ENCODE measurements at regions of chr11 and their contacts with region 1.

Region 1: GRCh38 chr11:26914968-26915367 is 78.9 kb upstream of the FIBIN start:
- DNase-seq: peak; percentile 94
- H3K4me3 ChIP-seq: peak overlapping the region; percentile 32
- H3K27ac ChIP-seq: peak overlapping the region; percentile 97
- H3K4me1 ChIP-seq: peaks cover 71% of the 10 kb centered on the region
- CTCF ChIP-seq: no peak

Region 2: DNA sequence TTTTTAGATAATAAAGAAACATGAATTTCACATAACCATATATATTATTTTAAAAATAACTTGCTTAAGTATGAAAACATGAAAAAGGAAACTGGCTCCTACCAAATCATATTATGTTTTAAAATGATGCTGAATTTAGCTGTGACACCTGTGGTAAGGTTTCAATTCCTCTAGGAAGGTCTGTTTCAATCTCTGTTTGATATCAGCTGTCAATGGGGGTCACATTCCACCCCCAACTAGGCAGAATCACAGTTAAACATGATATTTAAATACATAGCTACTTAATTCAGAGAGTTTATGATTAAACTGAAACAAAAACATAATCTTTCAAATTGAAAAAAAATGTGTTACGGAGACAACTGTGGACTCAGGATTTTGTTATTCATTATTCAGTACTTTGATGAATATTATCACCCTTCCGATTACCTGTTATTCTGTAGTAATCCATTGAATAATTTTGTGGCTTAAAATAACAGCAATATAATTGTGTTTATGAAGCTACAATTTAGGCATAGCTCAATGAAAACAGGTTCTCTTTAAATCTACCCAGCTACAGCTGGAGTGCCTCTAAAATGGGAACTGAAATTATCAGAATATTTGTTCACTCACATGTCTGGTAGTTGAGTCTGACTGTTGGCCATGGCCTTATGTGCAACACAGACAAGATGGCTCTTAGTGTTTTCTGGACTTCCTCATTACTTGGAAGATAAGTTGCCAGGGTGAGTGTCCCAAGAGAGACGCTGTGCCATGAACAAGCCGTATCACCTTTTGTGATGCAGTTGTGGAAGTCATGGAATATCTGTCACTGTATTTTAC is 827.6 kb before region 1 on chr11:
- CTCF ChIA-PET with region 1: no interaction called
- POLR2A ChIA-PET with region 1: no interaction called
- intact Hi-C with region 1: loop called (anchors 10 kb)
- DNase-seq: peak; percentile 91
- H3K4me3 ChIP-seq: peak overlapping the region; percentile 46
- H3K27ac ChIP-seq: peak overlapping the region; percentile 99
- H3K4me1 ChIP-seq: peaks cover 82% of the 10 kb centered on the region
- CTCF ChIP-seq: no peak

Region 3: GRCh38 chr11:26778000-26778757 is 136.8 kb before region 1 on chr11:
- CTCF ChIA-PET with region 1: no interaction called
- POLR2A ChIA-PET with region 1: no interaction called
- intact Hi-C with region 1: loop called (anchors 5 kb)
- DNase-seq: peak; percentile 60
- H3K4me3 ChIP-seq: no peak overlapping the region
- H3K27ac ChIP-seq: peak overlapping the region; percentile 49
- H3K4me1 ChIP-seq: peaks cover 30% of the 10 kb centered on the region
- CTCF ChIP-seq: no peak

Region 4: GRCh38 chr11:27158722-27159679 is 244.0 kb after region 1 on chr11:
- CTCF ChIA-PET with region 1: no interaction called
- POLR2A ChIA-PET with region 1: no interaction called
- intact Hi-C with region 1: loop called (anchors 10 kb)
- DNase-seq: peak; percentile 71
- H3K4me3 ChIP-seq: no peak overlapping the region
- H3K27ac ChIP-seq: no peak overlapping the region
- H3K4me1 ChIP-seq: no peaks in the 10 kb centered on the region
- CTCF ChIP-seq: peak; percentile 88

Region 5: GRCh38 chr11:27171376-27171775 is 256.4 kb after region 1 on chr11:
- CTCF ChIA-PET with region 1: no interaction called
- POLR2A ChIA-PET with region 1: no interaction called
- intact Hi-C with region 1: no loop called
- DNase-seq: no peak
- H3K4me3 ChIP-seq: no peak overlapping the region
- H3K27ac ChIP-seq: no peak overlapping the region
- H3K4me1 ChIP-seq: no peaks in the 10 kb centered on the region
- CTCF ChIP-seq: no peak

Region 6: GRCh38 chr11:28107748-28108618 is 1193.0 kb after region 1 on chr11 and contains the starts of genes KIF18A and METTL15:
- CTCF ChIA-PET with region 1: no interaction called
- POLR2A ChIA-PET with region 1: no interaction called
- intact Hi-C with region 1: loop called (anchors 5 kb)
- DNase-seq: peak; percentile 99
- H3K4me3 ChIP-seq: peak within 1 kb of the TSS; percentile 93
- H3K27ac ChIP-seq: peak within 1 kb of the TSS; percentile 82
- H3K4me1 ChIP-seq: peaks cover 40% of the 10 kb centered on the region
- CTCF ChIP-seq: no peak
- total RNA-seq, gene KIF18A: 36.4 and 41.5 TPM in 2 replicates
- total RNA-seq, gene METTL15: 11.7 and 18.9 TPM in 2 replicates

Measured in OCI-LY7 (cell line).